Natural killer cell (primary cell): ENCODE measurements at regions of chr15 and their contacts with region 1.

Region 1: GRCh38 chr15:39426552-39427532 is 154.0 kb upstream of the THBS1 start:
- DNase-seq: peak; percentile 81 to 86
- ATAC-seq: peak; percentile 87 to 91 (median 91)
- H3K4me3 ChIP-seq: peak overlapping the region; percentile 2
- H3K4me3 Mint-ChIP-seq: peak overlapping the region; percentile 80
- H3K27ac ChIP-seq: peak overlapping the region; percentile 12
- H3K27ac Mint-ChIP-seq: peak overlapping the region; percentile 85 to 90
- H3K4me1 ChIP-seq: peaks cover 23% of the 10 kb centered on the region
- H3K4me1 Mint-ChIP-seq: peaks cover 25 to 26% of the 10 kb centered on the region in 2 donors
- H3K27me3 ChIP-seq: peaks cover 18% of the 10 kb centered on the region
- H3K27me3 Mint-ChIP-seq: peaks cover 33 to 35% of the 10 kb centered on the region in 2 donors
- CTCF ChIP-seq: no peak

Region 2: GRCh38 chr15:39491886-39492490 is 65.1 kb after region 1 on chr15:
- intact Hi-C with region 1: loop called (anchors 5 kb)
- DNase-seq: no peak
- ATAC-seq: no peak
- H3K4me3 ChIP-seq: no peak overlapping the region
- H3K4me3 Mint-ChIP-seq: no peak overlapping the region
- H3K27ac ChIP-seq: no peak overlapping the region
- H3K27ac Mint-ChIP-seq: no peak overlapping the region
- H3K4me1 ChIP-seq: peaks cover 9% of the 10 kb centered on the region
- H3K4me1 Mint-ChIP-seq: peaks cover 32 to 33% of the 10 kb centered on the region in 2 donors
- H3K27me3 ChIP-seq: peaks cover 4% of the 10 kb centered on the region
- H3K27me3 Mint-ChIP-seq: peaks cover 48 to 64% of the 10 kb centered on the region in 2 donors
- CTCF ChIP-seq: no peak